AG04449 (cell line): ENCODE measurements at regions of chr20 and their contacts with region 1.

Region 1: DNA sequence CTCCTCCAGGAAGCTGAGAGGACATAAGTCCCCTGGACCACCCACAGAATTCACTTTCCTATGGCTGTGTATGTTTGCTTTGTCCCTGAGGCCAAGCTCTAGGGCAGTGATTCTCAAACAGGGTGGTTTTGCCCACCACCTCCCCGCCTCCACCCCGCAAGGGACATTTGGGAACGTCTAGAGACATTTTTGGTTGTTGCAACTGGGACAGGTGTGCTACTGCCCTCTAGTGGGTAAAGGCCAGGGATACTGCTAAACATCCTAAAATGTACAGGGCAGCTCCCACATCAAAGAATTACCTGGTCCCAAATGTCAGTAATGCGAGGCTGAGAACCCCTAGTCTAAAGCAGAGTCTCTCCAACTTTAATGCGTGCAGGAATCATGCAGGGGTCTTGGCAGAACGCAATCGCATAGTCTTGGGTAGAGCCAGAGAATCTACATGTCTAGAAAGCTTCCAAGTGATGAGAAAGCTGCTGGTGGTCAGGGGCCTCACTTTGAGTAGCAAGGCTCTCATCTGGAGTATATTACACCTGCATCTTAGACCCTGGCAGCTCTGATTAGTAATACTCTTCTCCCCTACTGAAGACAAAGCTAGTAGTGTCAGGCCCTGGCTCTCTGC is 5.1 kb downstream of the KCNS1 start:
- DNase-seq: peak; percentile 7
- H3K4me3 ChIP-seq: no peak overlapping the region
- CTCF ChIP-seq: peak; percentile 79

Region 2: DNA sequence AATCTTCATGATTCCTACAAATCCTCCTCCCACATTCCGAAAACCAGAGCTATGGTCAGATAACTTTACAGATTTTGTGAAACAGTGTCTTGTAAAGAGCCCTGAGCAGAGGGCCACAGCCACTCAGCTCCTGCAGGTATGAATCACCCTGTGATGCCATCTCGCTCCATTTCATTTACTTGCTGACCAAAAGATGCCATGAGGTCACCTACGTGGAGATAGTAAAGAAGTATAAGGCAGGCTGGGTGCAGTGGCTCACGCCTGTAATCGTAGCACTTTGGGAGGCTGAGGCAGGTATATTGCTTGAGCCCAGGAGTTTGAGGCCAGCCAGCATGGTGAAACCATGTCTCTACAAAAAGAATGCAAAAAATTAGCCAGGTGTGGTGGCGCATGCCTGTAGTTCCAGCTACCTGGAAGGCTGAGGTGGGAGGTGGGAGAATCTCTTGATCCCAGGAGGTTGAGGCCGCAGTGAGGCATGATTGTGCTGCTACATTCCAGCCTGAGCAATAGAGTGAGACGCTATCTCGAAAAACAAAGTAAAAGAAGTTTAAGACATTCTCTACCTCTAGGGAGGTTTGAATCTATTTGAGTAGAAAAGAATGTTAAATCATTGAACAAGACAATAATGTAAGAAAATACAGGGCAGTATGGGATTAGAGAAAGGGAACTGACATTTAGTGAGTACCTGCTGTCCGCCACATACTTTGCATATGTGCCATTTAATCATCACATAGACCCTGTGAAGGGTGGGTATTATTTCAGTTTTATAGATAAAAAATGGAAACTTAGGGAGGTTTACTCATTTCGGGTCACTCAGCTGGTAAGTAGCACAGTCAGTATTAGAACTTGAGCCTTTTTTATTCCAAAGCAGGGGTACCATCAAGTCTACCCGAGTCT is 98.4 kb before region 1 on chr20:
- CTCF ChIA-PET with region 1: interaction called, 18 read pairs
- POLR2A ChIA-PET with region 1: no interaction called
- DNase-seq: no peak
- H3K4me3 ChIP-seq: no peak overlapping the region
- CTCF ChIP-seq: no peak

Region 3: GRCh38 chr20:45028424-45029136 is 67.3 kb before region 1 on chr20:
- CTCF ChIA-PET with region 1: interaction called, 27 read pairs
- POLR2A ChIA-PET with region 1: no interaction called
- DNase-seq: no peak
- H3K4me3 ChIP-seq: no peak overlapping the region
- CTCF ChIP-seq: no peak

Region 4: GRCh38 chr20:45044084-45044573 is 51.7 kb before region 1 on chr20:
- CTCF ChIA-PET with region 1: interaction called, 297 read pairs
- POLR2A ChIA-PET with region 1: interaction called, 4 read pairs
- DNase-seq: peak; percentile 36
- H3K4me3 ChIP-seq: no peak overlapping the region
- CTCF ChIP-seq: peak; percentile 77

Region 5: GRCh38 chr20:45061244-45061643 is 34.6 kb before region 1 on chr20:
- CTCF ChIA-PET with region 1: interaction called, 129 read pairs
- POLR2A ChIA-PET with region 1: no interaction called
- DNase-seq: peak; percentile 61
- H3K4me3 ChIP-seq: no peak overlapping the region
- CTCF ChIP-seq: no peak

Region 6: DNA sequence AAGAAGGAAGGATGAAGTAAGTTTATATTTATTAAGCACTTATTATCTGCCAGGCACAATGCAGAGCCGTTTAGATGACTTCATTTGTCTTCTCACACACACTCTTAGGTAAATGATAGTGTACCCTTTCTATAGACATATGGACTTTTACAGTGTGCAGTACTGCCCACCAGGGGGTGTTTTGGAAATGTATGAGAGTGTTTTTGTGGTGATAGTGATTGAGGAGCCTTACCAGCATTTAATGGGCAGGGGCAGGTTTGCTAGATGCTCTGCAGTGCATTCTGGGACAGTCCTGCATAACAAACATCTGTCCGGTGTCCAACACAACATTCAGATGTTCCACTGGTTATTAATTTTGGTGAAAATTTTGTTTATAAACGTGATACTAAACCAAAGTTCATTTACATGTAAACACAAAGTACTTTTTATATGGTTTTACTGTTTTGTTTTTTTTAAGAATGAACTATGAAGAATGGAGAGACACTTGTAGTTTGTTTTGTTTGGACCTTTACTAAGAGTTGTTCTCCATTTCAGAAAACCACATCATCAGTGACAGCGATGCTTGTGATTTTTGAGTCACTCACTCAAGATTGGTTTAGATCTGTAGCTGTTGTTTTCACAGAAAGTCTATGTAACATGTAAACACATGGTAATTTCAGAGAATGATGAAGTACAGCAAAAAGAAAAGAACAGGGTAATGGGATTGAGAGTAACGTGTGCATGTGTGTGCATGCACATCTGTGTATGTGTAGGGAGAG is 14.8 kb before region 1 on chr20:
- CTCF ChIA-PET with region 1: interaction called, 39 read pairs
- POLR2A ChIA-PET with region 1: no interaction called
- DNase-seq: no peak
- H3K4me3 ChIP-seq: no peak overlapping the region
- CTCF ChIP-seq: peak; percentile 44